ENCODE measurements at regions of chr12 and their contacts with region 1.

Region 1: DNA sequence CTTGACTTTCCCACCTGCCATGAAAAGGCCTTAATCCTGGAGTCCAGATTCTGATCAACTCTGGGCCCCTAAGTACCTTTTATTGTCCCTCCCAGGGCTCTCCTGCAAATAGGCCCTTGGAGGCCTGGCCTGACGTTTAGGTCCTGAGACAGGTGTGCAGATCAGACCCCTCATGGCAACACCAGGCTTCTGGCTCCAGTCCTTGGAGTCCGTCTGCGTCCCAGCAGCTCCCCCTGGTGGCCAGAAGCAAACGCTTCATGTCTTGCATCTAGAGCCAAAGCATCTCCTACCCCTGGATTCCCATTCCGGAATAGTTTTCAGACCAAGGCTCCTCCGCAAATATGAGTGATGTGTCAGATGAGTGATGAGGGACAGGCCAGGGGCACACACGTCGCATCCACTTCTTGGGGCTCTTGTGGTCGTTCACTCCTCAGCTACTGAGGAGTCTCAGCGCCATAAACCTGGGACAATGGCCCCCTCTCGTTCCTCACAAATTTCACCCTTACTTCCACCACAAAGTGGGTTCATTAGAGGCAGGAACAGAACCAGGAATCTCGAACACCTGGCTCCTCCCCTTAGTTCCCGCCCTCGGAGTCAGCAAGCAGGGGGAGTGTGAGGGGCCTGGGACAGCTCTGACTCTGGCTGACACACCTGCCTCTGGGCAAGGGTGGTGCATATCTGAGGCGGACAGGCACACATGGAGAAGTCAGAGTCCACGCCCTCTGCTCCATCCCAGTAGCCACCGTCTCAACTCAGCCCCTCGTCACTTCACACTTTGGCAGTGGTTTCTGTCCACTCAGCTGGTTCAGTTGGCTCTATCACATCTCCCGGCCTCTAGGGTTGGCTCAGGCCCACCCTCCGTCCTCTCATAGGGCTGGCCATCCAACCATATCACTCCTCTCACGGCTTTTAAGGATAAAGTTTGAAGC is 77.9 kb upstream of the PWP1 start:
- DNase-seq: peak; percentile 79
- H3K4me3 Mint-ChIP-seq: no peak overlapping the region
- H3K27ac Mint-ChIP-seq: no peak overlapping the region
- H3K4me1 Mint-ChIP-seq: no peaks in the 10 kb centered on the region
- H3K27me3 Mint-ChIP-seq: no peaks in the 10 kb centered on the region

Region 2: GRCh38 chr12:107126796-107127481 is 480.8 kb before region 1 on chr12:
- CTCF ChIA-PET with region 1: interaction called, 172 read pairs
- POLR2A ChIA-PET with region 1: interaction called, 3 read pairs
- DNase-seq: no peak
- H3K4me3 Mint-ChIP-seq: no peak overlapping the region
- H3K27ac Mint-ChIP-seq: no peak overlapping the region
- H3K4me1 Mint-ChIP-seq: no peaks in the 10 kb centered on the region
- H3K27me3 Mint-ChIP-seq: peaks cover 15% of the 10 kb centered on the region

Measured in activated CD4-positive, alpha-beta memory T cell treated with anti-CD3 and anti-CD28 coated beads, Interleukin-2, amount 10 ng/mL, durations not matched to agents 7 days and 5 days (primary cell).